ENCODE measurements at regions of chr17 and their contacts with region 1.

Region 1: DNA sequence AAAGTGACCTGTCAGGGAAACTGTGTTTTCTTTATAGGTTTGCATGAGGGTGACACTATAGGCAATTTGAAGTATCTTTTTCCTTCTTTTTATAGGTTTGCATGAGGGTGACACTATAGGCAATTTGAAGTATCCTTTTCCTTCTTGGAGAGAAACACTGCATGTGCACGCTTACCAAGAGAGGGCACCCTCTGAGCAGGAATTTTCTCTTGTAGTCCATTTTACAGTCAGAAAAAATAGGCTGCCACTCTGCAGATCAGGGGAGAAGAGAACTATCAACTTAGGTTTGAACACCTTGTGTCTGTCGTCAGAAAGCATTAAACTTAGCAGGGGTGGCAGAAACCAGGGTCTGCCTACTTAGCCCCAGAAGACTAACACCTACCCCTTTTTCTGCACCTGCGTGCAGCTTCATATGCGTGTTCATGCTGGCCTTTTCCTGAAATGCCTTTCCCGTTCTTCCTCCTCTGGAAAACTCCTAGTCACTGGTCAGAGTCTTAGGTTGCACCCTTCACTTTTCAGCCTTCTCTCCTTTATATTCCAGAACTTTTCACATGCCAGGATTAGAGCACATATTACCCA is 16.4 kb upstream of the SMIM36 start:
- DNase-seq: no peak
- ATAC-seq: peak; percentile 70
- H3K4me3 ChIP-seq: no peak overlapping the region
- H3K27ac ChIP-seq: no peak overlapping the region
- H3K4me1 ChIP-seq: no peaks in the 10 kb centered on the region
- H3K27me3 ChIP-seq: no peaks in the 10 kb centered on the region
- CTCF ChIP-seq: peak; percentile 76

Region 2: DNA sequence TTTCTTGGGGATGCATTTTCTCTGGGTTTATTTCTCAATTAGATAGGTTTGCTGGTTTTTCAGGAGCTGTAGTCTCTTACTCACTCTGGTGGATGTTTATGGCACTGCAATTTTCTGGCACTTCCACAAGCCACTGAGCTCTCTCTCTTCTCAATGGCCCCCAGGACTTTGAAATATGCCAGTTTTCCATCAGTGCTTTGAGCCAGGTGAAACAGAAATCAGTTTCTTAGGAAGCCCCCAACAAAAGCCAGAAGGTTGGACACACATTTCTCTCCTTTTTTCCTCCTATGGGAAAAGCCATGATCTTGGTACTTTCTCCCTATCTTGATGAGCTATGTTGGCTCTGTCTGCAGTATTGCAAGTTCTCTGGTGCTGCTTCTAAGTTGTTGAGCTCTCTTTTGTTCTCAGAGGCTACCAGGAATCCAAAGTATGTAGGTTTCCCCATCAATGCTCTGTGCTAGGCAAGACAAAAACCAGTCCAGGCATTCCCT is 74.3 kb after region 1 on chr17:
- CTCF ChIA-PET with region 1: interaction called, 9 read pairs
- POLR2A ChIA-PET with region 1: no interaction called
- in situ Hi-C with region 1: no loop called
- intact Hi-C with region 1: loop called (anchors 1 kb)
- DNase-seq: peak; percentile 33
- ATAC-seq: peak; percentile 75; the same call in 1 of the 2 replicates
- H3K4me3 ChIP-seq: no peak overlapping the region
- H3K27ac ChIP-seq: no peak overlapping the region
- H3K4me1 ChIP-seq: no peaks in the 10 kb centered on the region
- H3K27me3 ChIP-seq: no peaks in the 10 kb centered on the region
- CTCF ChIP-seq: peak; percentile 79

Region 3: GRCh38 chr17:55717898-55718735 is 190.5 kb after region 1 on chr17:
- CTCF ChIA-PET with region 1: interaction called, 5 read pairs
- POLR2A ChIA-PET with region 1: no interaction called
- in situ Hi-C with region 1: no loop called
- intact Hi-C with region 1: loop called (anchors 1 kb)
- DNase-seq: no peak
- ATAC-seq: peak; percentile 73
- H3K4me3 ChIP-seq: no peak overlapping the region
- H3K27ac ChIP-seq: no peak overlapping the region
- H3K4me1 ChIP-seq: 0 out of 2 replicates have a peak, but pooled peaks cover 2% of the 10 kb centered on the region
- H3K27me3 ChIP-seq: peaks cover 13% of the 10 kb centered on the region
- CTCF ChIP-seq: peak; percentile 86

Region 4: GRCh38 chr17:55770148-55770870 is 242.7 kb after region 1 on chr17:
- CTCF ChIA-PET with region 1: no interaction called
- POLR2A ChIA-PET with region 1: no interaction called
- in situ Hi-C with region 1: no loop called
- intact Hi-C with region 1: loop called (anchors 1 kb)
- DNase-seq: no peak
- ATAC-seq: peak; percentile 87
- H3K4me3 ChIP-seq: no peak overlapping the region
- H3K27ac ChIP-seq: no peak overlapping the region
- H3K4me1 ChIP-seq: 0 out of 2 replicates have a peak, but pooled peaks cover 5% of the 10 kb centered on the region
- H3K27me3 ChIP-seq: no peaks in the 10 kb centered on the region
- CTCF ChIP-seq: peak; percentile 69

Region 5: DNA sequence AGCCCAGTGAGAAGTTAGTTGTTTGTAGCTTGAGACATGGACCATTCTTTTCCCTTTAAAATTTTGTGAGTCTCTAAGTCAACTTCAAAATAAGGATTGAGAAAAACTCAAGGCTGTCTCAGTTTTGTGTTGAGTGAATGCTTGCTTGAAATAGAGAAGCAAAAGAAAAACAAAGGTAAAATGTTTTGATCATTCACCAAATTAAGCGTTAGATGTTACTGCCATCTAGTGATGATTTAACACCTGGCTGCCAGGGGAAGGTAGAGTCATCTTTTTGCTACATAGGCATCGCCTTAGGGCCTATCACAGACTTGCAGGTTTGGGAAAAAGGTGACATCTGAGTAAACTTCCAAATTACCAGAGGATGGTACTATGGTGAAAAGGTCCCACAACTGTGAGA is 297.6 kb after region 1 on chr17:
- CTCF ChIA-PET with region 1: no interaction called
- POLR2A ChIA-PET with region 1: no interaction called
- in situ Hi-C with region 1: no loop called
- intact Hi-C with region 1: loop called (anchors 2 kb)
- DNase-seq: no peak
- ATAC-seq: 0 out of 2 replicates have a peak, but pooled peaks have one; percentile 60
- H3K4me3 ChIP-seq: no peak overlapping the region
- H3K27ac ChIP-seq: no peak overlapping the region
- H3K4me1 ChIP-seq: no peaks in the 10 kb centered on the region
- H3K27me3 ChIP-seq: no peaks in the 10 kb centered on the region
- CTCF ChIP-seq: peak; percentile 49; the same call in 1 of the 2 replicates

Region 6: DNA sequence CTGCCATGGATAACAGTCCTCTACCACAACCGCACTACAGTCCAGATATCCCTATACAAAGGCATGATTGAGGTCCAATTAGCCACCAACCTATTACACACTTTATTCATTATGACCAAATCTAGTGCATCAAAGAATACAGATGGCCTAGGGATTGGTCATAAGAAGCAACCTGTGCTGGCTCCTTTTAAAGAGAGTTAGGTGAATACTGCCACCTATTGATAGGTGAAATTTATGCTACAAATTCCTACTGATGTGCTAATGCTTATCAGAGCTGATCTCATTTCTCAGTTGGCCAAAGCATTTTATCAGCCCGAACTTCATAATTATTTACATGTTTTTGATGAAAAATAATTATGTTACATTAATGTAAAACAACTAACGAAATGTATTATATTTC is 791.9 kb after region 1 on chr17:
- CTCF ChIA-PET with region 1: interaction called, 3 read pairs
- POLR2A ChIA-PET with region 1: no interaction called
- in situ Hi-C with region 1: no loop called
- intact Hi-C with region 1: loop called (anchors 5 kb)
- DNase-seq: peak; percentile 13
- ATAC-seq: peak; percentile 87
- H3K4me3 ChIP-seq: no peak overlapping the region
- H3K27ac ChIP-seq: no peak overlapping the region
- H3K4me1 ChIP-seq: no peaks in the 10 kb centered on the region
- H3K27me3 ChIP-seq: no peaks in the 10 kb centered on the region
- CTCF ChIP-seq: peak; percentile 68

Measured in Panc1 (cell line).